ENCODE measurements at regions of chr11 and their contacts with region 1.

Region 1: GRCh38 chr11:61985885-61986345 is 18.5 kb upstream of the FTH1 start:
- DNase-seq: peak; percentile 84 to 87
- H3K4me3 ChIP-seq: no peak overlapping the region
- H3K4me3 Mint-ChIP-seq: peak overlapping the region; percentile 52
- H3K27ac Mint-ChIP-seq: peak overlapping the region; percentile 85
- H3K4me1 ChIP-seq: peaks cover 21% of the 10 kb centered on the region
- H3K4me1 Mint-ChIP-seq: peaks cover 14% of the 10 kb centered on the region
- H3K27me3 ChIP-seq: no peaks in the 10 kb centered on the region
- H3K27me3 Mint-ChIP-seq: no peaks in the 10 kb centered on the region
- CTCF ChIP-seq: no peak

Region 2: DNA sequence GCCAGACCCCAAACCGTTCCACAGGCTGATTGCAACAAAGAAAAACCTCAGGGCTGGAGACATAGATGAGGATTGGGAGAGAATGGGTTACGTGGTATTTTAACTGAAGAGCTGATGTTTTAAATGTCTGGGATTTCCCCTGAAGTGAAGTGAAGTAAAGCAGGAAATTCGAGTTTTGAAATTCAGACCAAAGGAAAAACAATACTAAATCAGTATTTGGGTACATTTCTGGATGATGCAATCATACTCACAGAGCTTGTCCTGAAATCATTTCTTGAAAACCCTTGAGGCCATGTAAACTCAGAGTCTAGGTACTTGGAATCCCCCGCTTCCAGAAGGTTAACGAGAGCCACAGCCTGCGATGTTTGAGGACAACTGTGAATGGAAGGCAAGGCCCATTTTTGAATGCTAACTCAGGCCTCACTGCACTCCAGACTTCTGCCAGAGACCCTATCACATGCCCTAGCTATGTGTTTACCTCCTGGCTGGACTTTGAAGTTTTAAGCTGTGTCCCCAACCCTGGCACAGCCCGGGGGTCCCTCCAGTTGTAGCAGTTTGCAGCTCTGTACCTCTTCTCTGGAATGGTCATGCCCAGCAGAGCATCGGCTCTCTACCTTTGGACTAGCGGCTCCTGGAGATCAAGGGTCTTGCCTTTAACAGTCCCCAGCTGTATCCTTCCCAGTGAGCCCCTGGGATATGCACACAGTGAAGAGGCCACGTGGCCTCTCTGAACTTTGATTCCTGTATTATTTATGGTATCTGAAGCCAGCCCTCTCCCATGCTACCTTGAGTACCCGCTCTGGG is 13.0 kb before region 1 on chr11:
- CTCF ChIA-PET with region 1: interaction called, 4 read pairs
- POLR2A ChIA-PET with region 1: interaction called, 25 read pairs
- intact Hi-C with region 1: loop called (anchors 1 kb)
- DNase-seq: peak; percentile 47 to 61
- H3K4me3 ChIP-seq: no peak overlapping the region
- H3K4me3 Mint-ChIP-seq: peak overlapping the region; percentile 56
- H3K27ac Mint-ChIP-seq: peak overlapping the region; percentile 85
- H3K4me1 ChIP-seq: peaks cover 36% of the 10 kb centered on the region
- H3K4me1 Mint-ChIP-seq: peaks cover 49% of the 10 kb centered on the region
- H3K27me3 ChIP-seq: no peaks in the 10 kb centered on the region
- H3K27me3 Mint-ChIP-seq: no peaks in the 10 kb centered on the region
- CTCF ChIP-seq: no peak

Region 3: DNA sequence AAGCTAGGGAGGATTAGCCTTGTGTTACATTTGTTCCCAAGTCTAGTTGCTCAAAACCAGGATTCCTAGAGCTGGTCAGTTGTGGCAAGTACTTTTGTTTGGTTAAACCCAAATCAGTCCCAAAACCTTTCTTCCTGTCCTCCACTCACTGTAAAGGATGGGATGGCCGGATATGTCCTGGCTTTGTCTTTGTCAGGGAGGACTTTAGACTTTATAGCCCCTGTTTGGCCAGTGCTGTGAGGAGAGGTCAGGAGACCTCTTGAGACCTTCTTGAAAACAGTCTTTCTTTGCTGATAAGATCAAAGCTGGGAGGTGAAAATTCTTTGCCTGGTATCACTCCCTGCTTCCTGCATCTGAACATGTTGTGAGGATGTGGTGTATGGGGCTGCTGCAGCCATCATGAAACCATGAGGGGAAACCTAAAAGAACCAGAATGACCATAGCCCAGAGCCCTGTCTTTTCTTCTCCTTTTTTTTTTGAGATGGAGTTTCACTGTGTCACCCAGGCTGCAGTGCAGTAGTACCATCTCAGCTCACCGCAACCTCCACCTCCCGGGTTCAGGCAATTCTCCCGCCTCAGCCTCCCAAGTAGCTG is 25.1 kb after region 1 on chr11:
- CTCF ChIA-PET with region 1: no interaction called
- POLR2A ChIA-PET with region 1: no interaction called
- intact Hi-C with region 1: loop called (anchors 1 kb)
- DNase-seq: peak; percentile 28 to 46
- H3K4me3 ChIP-seq: no peak overlapping the region
- H3K4me3 Mint-ChIP-seq: no peak overlapping the region
- H3K27ac Mint-ChIP-seq: peak overlapping the region; percentile 42
- H3K4me1 ChIP-seq: peaks cover 30% of the 10 kb centered on the region
- H3K4me1 Mint-ChIP-seq: peaks cover 10% of the 10 kb centered on the region
- H3K27me3 ChIP-seq: no peaks in the 10 kb centered on the region
- H3K27me3 Mint-ChIP-seq: no peaks in the 10 kb centered on the region
- CTCF ChIP-seq: no peak

Region 4: DNA sequence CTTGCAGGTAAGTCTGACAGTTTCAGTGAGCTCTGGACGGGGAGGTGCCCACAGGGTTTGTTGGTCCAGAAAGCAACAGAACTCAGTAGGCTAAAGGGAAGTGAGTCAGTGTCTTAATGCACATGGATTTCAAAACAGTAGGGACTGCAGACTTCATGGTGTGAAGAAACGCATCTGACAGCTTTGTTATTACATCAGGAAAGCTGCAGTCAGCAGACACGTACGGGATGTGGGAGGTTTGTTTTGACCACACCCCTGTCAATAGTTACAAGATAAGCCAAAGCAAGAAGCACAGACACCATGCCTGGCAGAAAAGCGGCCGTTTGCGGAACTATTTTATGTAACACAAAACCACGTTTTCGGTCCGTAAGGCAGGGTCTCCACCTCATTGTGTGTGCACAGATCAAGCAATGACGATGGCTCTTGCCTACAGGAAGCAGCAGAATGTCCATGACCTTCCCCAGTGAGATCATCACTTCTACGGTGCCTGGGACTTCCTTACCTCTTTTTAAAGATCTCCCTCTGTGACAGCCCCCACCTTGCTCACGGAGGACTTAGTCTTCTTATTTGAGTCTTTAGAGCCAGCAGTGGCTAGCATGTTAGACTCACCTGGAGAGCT is 39.7 kb after region 1 on chr11:
- CTCF ChIA-PET with region 1: interaction called, 3 read pairs
- POLR2A ChIA-PET with region 1: no interaction called
- intact Hi-C with region 1: loop called (anchors 5 kb)
- DNase-seq: peak; percentile 66 to 71
- H3K4me3 ChIP-seq: peak overlapping the region; percentile 2; the same call in 1 of the 2 replicates
- H3K4me3 Mint-ChIP-seq: peak overlapping the region; percentile 63
- H3K27ac Mint-ChIP-seq: peak overlapping the region; percentile 34
- H3K4me1 ChIP-seq: 0 out of 2 replicates have a peak, but pooled peaks cover 5% of the 10 kb centered on the region
- H3K4me1 Mint-ChIP-seq: peaks cover 5% of the 10 kb centered on the region
- H3K27me3 ChIP-seq: no peaks in the 10 kb centered on the region
- H3K27me3 Mint-ChIP-seq: no peaks in the 10 kb centered on the region
- CTCF ChIP-seq: no peak

Region 5: DNA sequence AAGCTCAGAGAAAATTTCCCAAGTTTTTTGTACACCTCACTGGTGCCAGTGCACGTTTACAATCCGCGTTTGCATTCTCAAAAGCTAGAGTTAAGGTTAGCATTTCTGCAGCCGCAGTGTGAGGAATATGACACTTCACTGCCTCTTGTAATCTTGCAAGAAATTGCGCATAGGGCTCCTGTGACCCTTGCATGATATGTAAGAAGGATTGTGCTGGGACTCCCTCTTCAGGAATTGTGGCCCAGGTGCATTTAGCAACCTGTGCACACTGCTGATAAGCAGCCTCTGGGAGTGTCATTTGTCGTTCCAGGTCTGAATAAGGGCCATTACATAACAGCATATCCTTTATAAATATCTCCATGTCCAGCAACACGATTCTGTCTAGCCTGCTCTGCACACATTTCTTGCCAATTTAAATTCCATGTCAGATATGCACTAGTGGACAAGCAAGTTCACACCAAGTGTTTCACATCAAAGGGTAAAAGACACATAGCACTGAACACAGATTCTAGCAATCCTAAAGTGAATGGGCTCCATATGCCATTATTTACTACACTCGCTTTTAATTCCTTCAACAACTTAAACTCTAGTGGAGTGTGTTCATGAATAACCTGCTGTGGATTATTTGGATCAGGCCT is 68.7 kb after region 1 on chr11:
- CTCF ChIA-PET with region 1: no interaction called
- POLR2A ChIA-PET with region 1: no interaction called
- intact Hi-C with region 1: loop called (anchors 1 kb)
- DNase-seq: peak; percentile 83 to 85
- H3K4me3 ChIP-seq: no peak overlapping the region
- H3K4me3 Mint-ChIP-seq: peak overlapping the region; percentile 25
- H3K27ac Mint-ChIP-seq: peak overlapping the region; percentile 81
- H3K4me1 ChIP-seq: 0 out of 2 replicates have a peak, but pooled peaks cover 5% of the 10 kb centered on the region
- H3K4me1 Mint-ChIP-seq: no peaks in the 10 kb centered on the region
- H3K27me3 ChIP-seq: no peaks in the 10 kb centered on the region; the same call in 1 of the 2 replicates
- H3K27me3 Mint-ChIP-seq: no peaks in the 10 kb centered on the region
- CTCF ChIP-seq: peak; percentile 78 to 93

Region 6: DNA sequence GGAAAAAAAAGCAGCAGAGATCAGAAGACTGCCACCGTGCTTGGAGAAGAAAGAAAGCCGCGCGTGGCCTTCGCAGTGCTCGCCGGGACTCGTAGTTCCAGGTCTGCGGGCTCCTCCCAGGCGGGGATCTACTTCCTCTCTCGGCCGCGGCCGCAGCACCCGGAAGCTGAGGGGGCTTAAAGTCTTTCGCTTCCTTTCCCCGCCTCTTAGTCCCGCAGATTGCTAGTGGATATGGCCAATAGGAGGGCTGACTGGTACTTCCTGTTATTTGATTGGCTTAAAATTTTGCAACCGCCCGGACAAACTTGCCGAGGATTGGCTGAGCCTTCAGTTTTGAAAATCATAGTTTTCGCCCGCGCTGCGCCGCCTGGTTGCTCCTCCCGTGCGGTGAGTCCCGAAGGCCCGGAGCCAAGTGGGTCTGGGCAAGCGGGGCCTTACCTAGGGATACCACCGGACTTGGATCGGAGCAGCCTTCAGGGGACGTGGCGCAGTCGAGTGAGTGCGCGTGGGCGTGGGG is 137.8 kb after region 1 on chr11 and contains the start of gene INCENP:
- CTCF ChIA-PET with region 1: no interaction called
- POLR2A ChIA-PET with region 1: no interaction called
- intact Hi-C with region 1: no loop called
- DNase-seq: peak; percentile 97 to 98
- H3K4me3 ChIP-seq: peak within 1 kb of the TSS; percentile 96
- H3K4me3 Mint-ChIP-seq: peak within 1 kb of the TSS; percentile 98
- H3K27ac Mint-ChIP-seq: peak within 1 kb of the TSS; percentile 98
- H3K4me1 ChIP-seq: peaks cover 5% of the 10 kb centered on the region
- H3K4me1 Mint-ChIP-seq: peaks cover 14% of the 10 kb centered on the region
- H3K27me3 ChIP-seq: no peaks in the 10 kb centered on the region
- H3K27me3 Mint-ChIP-seq: no peaks in the 10 kb centered on the region
- CTCF ChIP-seq: no peak
- total RNA-seq, gene INCENP: 101 and 110 TPM in 2 replicates

Measured in Caco-2 (cell line).